A549 (cell line): ENCODE measurements at regions of chr19 and their contacts with region 1.

Region 1: DNA sequence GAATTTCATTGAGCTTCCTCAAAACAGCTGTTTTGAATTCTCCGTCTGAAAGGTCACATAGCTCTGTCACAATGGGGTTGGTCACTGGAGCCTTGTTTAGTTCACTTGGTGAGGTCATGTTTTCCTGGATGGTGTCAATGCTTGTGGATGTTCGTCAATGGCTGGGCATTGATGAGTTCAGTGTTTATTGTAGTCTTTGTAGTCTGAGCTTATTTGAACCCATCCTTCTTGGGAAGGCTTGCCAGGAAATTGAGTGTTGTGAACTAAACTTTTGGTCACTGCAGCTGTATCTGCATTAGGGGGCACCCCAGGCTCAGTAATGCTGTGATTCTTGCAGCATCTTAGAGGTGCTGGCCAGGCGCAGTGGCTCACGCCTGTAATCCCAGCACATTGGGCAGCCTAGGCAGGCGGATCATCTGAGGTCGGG is 22.0 kb downstream of the BLOC1S3 start:
- DNase-seq: peak in 1 of 2 experiments; percentile 74
- ATAC-seq: peak; percentile 63 to 84; a peak in 4 of 6 replicates
- H3K4me3 ChIP-seq: no peak overlapping the region
- H3K27ac ChIP-seq: no peak overlapping the region
- H3K4me1 ChIP-seq: peaks cover 5% of the 10 kb centered on the region; the same call in 1 of the 3 replicates
- CTCF ChIP-seq: peak; percentile 48
- EP300 ChIP-seq: no peak
- POLR2A ChIP-seq: no peak
- RAD21 ChIP-seq: peak; percentile 63 to 82

Region 2: DNA sequence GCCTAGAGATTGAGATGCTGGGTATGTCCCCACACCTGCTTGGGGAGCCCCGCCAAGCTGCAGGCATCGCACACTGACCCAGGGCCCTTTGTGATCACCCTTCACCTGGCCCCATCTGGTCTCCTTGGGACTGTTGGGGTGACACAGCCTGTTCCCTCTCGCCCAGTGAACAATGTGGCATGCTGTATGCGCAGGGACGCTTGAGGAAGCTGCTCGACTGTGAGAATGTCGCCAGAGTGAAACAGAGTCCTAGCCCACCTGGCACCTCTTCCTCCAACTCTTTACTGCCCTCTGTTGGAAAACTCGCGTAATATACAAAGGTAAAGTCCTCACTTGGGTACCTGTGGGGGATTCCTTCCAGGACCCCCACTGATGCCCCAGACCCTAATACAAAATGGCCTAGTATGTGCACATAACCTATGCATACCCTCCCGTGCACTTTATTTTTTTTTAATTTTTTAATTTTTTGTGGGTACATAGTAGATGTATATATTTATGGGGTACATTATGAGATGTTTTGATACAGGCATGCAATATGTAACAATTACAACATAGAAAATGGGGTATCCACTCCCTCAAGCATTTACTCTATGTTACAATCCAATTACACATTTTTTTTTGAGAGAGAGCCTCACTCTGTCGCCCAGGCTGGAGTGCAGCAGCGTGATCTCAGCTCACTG is 13.0 kb before region 1 on chr19:
- CTCF ChIA-PET with region 1: interaction called, 11 read pairs
- POLR2A ChIA-PET with region 1: no interaction called
- DNase-seq: peak in 1 of 2 experiments; percentile 49
- ATAC-seq: peak; percentile 43 to 71; a peak in 4 of 6 replicates
- H3K4me3 ChIP-seq: no peak overlapping the region
- H3K27ac ChIP-seq: no peak overlapping the region
- H3K4me1 ChIP-seq: no peaks in the 10 kb centered on the region
- CTCF ChIP-seq: peak; percentile 64
- EP300 ChIP-seq: no peak
- POLR2A ChIP-seq: no peak
- RAD21 ChIP-seq: peak; percentile 49 to 61; a peak in 4 of 5 replicates

Region 3: GRCh38 chr19:45215383-45216191 is 15.0 kb after region 1 on chr19:
- CTCF ChIA-PET with region 1: interaction called, 10 read pairs
- POLR2A ChIA-PET with region 1: no interaction called
- DNase-seq: no peak
- ATAC-seq: no peak
- H3K4me3 ChIP-seq: no peak overlapping the region
- H3K27ac ChIP-seq: no peak overlapping the region
- H3K4me1 ChIP-seq: peaks cover 4% of the 10 kb centered on the region; the same call in 1 of the 3 replicates
- CTCF ChIP-seq: no peak
- EP300 ChIP-seq: no peak
- POLR2A ChIP-seq: no peak
- RAD21 ChIP-seq: no peak